H1 (cell line): ENCODE measurements at regions of chr2 and their contacts with region 1.

Region 1: DNA sequence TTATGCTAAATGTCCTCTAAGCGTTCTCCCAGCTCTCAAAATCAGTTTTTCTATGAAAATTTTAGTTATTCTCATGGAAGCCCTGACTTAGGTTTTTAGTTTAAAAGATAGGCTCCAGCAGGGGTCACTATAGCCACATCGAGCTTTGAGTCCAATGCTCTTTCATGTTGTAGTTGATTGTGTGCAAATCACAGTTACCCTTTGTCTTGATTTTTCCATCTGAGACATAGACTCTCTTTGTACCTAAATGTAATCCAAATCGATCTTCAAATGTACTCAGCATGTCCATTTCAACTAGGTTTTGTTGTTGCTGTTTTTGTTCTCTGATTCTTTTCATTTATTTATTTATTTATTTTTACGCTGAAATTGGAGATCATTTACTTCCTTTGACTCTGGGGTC is 26.4 kb upstream of the MSTN start:
- DNase-seq: no peak
- H3K4me3 ChIP-seq: no peak overlapping the region
- H3K27ac ChIP-seq: no peak overlapping the region
- H3K4me1 ChIP-seq: no peaks in the 10 kb centered on the region
- H3K27me3 ChIP-seq: no peaks in the 10 kb centered on the region
- CTCF ChIP-seq: peak in 2 of 3 experiments; percentile 56 to 66; a peak in 3 of 4 replicates
- EP300 ChIP-seq: no peak
- POLR2A ChIP-seq: no peak
- RAD21 ChIP-seq: peak; percentile 85 to 89

Region 2: DNA sequence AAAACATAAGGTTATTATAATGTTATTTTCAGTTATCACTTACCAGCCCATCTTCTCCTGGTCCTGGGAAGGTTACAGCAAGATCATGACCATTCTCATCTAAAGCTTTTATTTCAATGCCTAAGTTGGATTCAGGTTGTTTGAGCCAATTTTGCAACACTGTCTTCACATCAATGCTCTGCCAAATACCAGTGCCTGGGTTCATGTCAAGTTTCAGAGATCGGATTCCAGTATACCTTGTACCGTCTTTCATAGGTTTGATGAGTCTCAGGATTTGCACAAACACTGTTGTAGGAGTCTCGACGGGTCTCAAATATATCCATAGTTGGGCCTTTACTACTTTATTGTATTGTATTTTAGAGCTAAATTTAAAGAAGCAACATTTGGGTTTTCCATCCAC is 28.9 kb before region 1 on chr2:
- CTCF ChIA-PET with region 1: no interaction called
- POLR2A ChIA-PET with region 1: no interaction called
- DNase-seq: no peak
- H3K4me3 ChIP-seq: no peak overlapping the region
- H3K27ac ChIP-seq: no peak overlapping the region
- H3K4me1 ChIP-seq: no peaks in the 10 kb centered on the region
- H3K27me3 ChIP-seq: no peaks in the 10 kb centered on the region
- CTCF ChIP-seq: no peak
- EP300 ChIP-seq: no peak
- POLR2A ChIP-seq: no peak
- RAD21 ChIP-seq: no peak

Region 3: DNA sequence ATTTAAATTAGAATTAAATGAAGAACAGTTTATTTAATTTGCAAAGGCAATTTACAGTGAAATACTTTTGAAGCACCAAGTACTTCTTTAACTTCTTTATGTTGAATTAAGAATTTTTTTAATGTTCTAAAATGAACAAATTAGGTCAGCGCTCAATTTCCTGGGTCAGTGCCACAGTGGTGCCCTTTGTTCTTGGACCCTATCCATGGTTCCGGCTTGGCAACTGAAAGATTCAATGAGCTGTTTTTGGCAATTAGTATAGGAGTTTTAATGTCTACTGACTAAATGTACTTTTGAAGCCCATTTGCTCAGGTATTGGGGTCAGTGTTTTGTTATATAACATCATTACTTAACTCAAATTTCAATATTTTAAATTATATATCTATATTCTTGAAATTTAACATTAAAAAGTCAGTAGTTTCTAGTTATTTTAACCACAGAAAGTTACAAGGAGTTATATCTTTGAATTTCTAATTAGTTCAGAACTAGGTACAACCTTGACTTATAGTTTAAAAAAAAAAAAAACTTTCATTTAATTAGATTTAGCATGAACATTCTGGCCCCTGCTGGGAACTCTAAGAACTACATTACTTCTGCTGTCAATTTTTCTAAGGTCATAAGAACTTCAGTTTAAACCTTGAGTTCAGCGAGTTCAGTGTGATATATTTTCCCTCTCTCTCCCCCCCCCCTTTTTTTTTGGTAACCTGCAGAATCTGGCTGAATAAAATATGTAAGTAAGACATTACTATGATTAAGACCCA is 18.8 kb before region 1 on chr2:
- CTCF ChIA-PET with region 1: interaction called, 26 read pairs
- POLR2A ChIA-PET with region 1: no interaction called
- DNase-seq: no peak
- H3K4me3 ChIP-seq: no peak overlapping the region
- H3K27ac ChIP-seq: no peak overlapping the region
- H3K4me1 ChIP-seq: no peaks in the 10 kb centered on the region
- H3K27me3 ChIP-seq: no peaks in the 10 kb centered on the region
- CTCF ChIP-seq: peak in 2 of 3 experiments; percentile 20 to 39; a peak in 2 of 4 replicates
- EP300 ChIP-seq: no peak
- POLR2A ChIP-seq: no peak
- RAD21 ChIP-seq: peak; percentile 64 to 66

Region 4: DNA sequence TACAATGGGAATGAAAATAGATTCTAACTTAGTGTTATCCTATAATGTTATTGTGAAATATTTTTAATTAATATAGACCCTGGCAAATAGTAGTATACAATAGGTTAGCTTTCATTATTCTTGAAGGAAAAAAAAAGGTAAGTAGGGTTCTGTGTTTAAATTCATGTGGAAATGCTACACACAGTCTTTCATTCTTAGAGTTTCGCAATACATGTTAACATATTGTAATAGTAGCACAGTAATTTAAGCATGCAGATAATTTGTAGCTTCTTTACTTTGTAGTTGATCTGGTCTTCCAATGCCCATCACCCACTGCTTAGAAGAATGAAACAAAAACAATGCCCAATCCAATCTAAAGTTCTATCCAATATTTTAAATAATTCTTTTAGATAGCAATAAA is 28.4 kb after region 1 on chr2:
- CTCF ChIA-PET with region 1: interaction called, 10 read pairs
- POLR2A ChIA-PET with region 1: no interaction called
- DNase-seq: no peak
- H3K4me3 ChIP-seq: no peak overlapping the region
- H3K27ac ChIP-seq: no peak overlapping the region
- H3K4me1 ChIP-seq: peaks cover 2 to 9% (median 4%) of the 10 kb centered on the region in 4 experiments; a peak in 5 of 7 replicates
- H3K27me3 ChIP-seq: no peaks in the 10 kb centered on the region
- CTCF ChIP-seq: no peak
- EP300 ChIP-seq: no peak
- POLR2A ChIP-seq: no peak
- RAD21 ChIP-seq: no peak

Region 5: DNA sequence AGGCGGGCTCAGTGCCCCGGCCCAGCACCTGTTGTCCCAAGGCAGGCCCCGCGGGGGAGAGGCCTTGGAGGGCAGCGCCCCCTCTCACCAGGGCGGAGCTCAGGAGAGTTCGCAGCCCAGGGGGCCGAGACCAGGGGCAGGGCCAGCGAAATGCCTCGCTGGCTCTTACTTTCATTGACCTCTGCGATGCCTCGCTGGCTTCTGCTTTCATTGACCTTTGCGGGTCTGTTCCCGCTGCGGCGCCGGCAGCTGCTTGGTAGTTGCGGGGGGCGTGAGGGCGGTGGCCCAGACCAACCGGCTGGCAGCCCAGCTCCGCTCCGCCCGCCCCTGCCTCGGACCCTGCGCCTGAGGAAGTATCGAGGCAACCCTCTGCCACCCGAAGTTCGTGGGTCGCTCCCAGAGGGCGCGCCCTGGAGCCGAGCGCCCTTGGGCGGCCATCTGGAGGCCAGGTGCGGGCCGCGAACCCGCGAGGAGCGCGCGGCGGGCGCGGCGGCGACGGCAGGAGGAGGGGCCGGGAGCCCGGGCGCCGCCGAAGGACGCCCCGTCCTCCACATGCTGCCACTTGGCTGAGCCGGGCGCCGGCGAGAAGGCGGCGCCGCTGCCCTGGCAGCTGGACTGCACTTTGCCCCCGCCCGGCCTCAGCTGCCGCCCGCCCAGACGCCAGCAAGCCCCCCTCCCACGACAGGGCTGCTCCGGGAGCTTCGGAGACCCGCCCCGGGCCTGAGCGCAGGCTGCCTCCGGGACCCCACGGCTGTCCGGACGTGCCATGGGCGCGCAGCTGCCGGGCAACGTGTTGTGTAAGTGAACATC is 91.6 kb after region 1 on chr2:
- CTCF ChIA-PET with region 1: interaction called, 16 read pairs
- POLR2A ChIA-PET with region 1: no interaction called
- DNase-seq: peak; percentile 33 to 83
- H3K4me3 ChIP-seq: peak overlapping the region; percentile 37 to 80 (median 62)
- H3K27ac ChIP-seq: no peak overlapping the region
- H3K4me1 ChIP-seq: peaks cover 0 to 2% (median 0%) of the 10 kb centered on the region in 4 experiments; a peak in 1 of 7 replicates
- H3K27me3 ChIP-seq: peaks cover 0 to 8% (median 4%) of the 10 kb centered on the region in 4 experiments; a peak in 4 of 7 replicates
- CTCF ChIP-seq: peak; percentile 45 to 69 (median 45); a peak in 3 of 4 replicates
- EP300 ChIP-seq: no peak; a peak in 1 of 3 replicates
- POLR2A ChIP-seq: 0 out of 3 replicates have a peak, but pooled peaks of 1 of the 2 experiments have one; percentile 26
- RAD21 ChIP-seq: peak in 1 of 2 experiments; percentile 30; a peak in 2 of 4 replicates

Region 6: DNA sequence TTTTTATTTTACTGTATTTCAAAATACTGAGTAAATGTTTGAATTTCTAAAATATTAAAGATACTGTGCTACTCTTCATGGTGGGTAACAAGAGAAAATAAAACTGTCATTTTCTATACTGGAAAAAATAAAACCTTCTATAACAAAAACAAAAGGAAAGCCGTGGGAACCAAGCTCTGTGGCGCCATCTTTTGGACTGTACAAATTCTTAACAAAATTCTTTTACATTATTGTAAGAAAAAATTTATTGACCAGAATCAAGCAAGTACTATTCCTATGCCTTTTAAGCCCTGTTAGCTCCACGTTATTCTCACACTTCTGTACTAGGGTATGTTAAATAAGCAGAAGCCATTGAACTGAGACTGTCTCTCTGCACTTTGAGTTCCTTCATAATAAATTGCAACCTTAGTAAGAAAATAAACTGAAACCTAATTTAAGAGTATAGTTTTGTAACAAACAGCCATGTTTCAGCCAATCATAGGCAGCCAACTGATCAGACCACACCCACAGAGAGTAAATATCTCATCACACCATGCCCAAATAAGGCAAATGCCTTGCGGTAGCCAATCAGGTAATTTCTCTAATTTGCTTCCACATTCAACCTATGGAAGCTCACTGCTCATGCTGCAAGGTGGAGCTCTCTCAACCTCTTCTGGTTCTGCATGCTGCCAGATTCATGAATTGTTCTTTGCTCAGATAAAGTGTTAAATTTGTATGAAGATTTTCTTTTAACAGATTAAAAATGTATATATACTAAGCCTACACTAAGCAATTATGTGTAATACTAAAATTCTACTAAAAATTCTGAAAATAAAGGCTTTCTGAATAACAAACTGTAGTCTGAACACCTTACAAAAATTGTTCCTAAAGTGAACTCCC is 188.6 kb after region 1 on chr2:
- CTCF ChIA-PET with region 1: interaction called, 12 read pairs
- POLR2A ChIA-PET with region 1: no interaction called
- DNase-seq: no peak
- H3K4me3 ChIP-seq: no peak overlapping the region
- H3K27ac ChIP-seq: no peak overlapping the region
- H3K4me1 ChIP-seq: no peaks in the 10 kb centered on the region
- H3K27me3 ChIP-seq: no peaks in the 10 kb centered on the region
- CTCF ChIP-seq: peak in 2 of 3 experiments; percentile 17 to 21; a peak in 2 of 4 replicates
- EP300 ChIP-seq: no peak
- POLR2A ChIP-seq: no peak
- RAD21 ChIP-seq: peak; percentile 46 to 48